ENCODE measurements at regions of chr13 and their contacts with region 1.

Region 1: GRCh38 chr13:20495082-20496023 is 30.3 kb downstream of the CRYL1 start:
- H3K4me3 Mint-ChIP-seq: no peak overlapping the region
- H3K27ac Mint-ChIP-seq: no peak overlapping the region
- H3K4me1 Mint-ChIP-seq: peaks cover 1% of the 10 kb centered on the region
- H3K27me3 Mint-ChIP-seq: no peaks in the 10 kb centered on the region

Region 2: GRCh38 chr13:20160847-20161274 is 334.5 kb before region 1 on chr13 and contains the start of gene GJA3:
- intact Hi-C with region 1: no loop called
- H3K4me3 Mint-ChIP-seq: peak within 1 kb of the TSS; percentile 74
- H3K27ac Mint-ChIP-seq: no peak within 1 kb of the TSS
- H3K4me1 Mint-ChIP-seq: peaks cover 9% of the 10 kb centered on the region
- H3K27me3 Mint-ChIP-seq: peaks cover 64% of the 10 kb centered on the region

Region 3: GRCh38 chr13:20197361-20197834 is 298.0 kb before region 1 on chr13:
- intact Hi-C with region 1: loop called (anchors 10 kb)
- H3K4me3 Mint-ChIP-seq: no peak overlapping the region
- H3K27ac Mint-ChIP-seq: no peak overlapping the region
- H3K4me1 Mint-ChIP-seq: peaks cover 20% of the 10 kb centered on the region
- H3K27me3 Mint-ChIP-seq: peaks cover 37% of the 10 kb centered on the region

Region 4: GRCh38 chr13:20566898-20567874 is 71.8 kb after region 1 on chr13 and contains the start of gene IFT88:
- intact Hi-C with region 1: loop called (anchors 5 kb)
- H3K4me3 Mint-ChIP-seq: peak within 1 kb of the TSS; percentile 91
- H3K27ac Mint-ChIP-seq: peak within 1 kb of the TSS; percentile 96
- H3K4me1 Mint-ChIP-seq: peaks cover 16% of the 10 kb centered on the region
- H3K27me3 Mint-ChIP-seq: peaks cover 5% of the 10 kb centered on the region

Region 5: GRCh38 chr13:20713751-20714150 is 218.4 kb after region 1 on chr13:
- intact Hi-C with region 1: loop called (anchors 2 kb)
- H3K4me3 Mint-ChIP-seq: no peak overlapping the region
- H3K27ac Mint-ChIP-seq: no peak overlapping the region
- H3K4me1 Mint-ChIP-seq: peaks cover 9% of the 10 kb centered on the region
- H3K27me3 Mint-ChIP-seq: peaks cover 28% of the 10 kb centered on the region

Region 6: DNA sequence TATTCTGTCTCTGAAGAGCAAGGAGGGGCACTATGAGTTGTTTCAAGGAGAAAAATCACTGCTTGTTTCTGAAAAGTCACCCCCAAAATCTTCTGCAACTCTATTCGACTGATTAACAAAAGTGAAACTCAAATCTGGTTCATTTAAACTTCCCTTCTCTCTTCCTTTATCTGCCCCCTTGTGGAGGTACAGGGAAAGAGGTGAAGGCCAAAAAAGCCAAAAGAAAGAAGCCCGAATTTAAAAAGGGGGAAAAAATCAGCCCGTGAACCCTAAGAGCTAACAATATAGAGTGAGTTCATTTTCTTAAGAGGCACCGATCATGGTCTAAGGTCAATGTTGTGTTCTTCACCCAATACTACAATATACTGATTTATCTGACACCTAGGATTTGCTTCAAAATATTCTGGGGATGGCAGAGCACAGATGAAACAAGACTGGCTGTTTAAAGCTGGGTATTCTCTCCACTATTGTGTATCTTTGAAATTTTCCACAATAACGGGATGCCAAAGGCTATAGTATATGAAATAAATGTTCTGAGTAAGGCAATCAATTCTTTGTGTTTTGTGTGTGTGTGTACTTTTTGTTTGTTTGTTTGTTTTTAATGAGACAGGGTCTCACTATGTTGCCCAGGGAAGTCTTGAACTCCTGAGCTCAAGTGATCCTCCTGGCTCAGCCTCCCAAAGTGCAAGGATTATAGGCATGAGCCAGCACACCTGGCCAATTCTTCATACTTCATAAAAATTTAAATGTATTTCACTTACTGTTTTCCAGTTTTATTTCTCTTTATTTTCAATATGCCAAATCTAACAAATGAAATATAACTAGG is 333.4 kb after region 1 on chr13:
- intact Hi-C with region 1: loop called (anchors 1 kb)
- H3K4me3 Mint-ChIP-seq: peak overlapping the region; percentile 34
- H3K27ac Mint-ChIP-seq: no peak overlapping the region
- H3K4me1 Mint-ChIP-seq: peaks cover 6% of the 10 kb centered on the region
- H3K27me3 Mint-ChIP-seq: no peaks in the 10 kb centered on the region

Region 7: GRCh38 chr13:20924758-20925394 is 429.5 kb after region 1 on chr13:
- intact Hi-C with region 1: loop called (anchors 1 kb)
- H3K4me3 Mint-ChIP-seq: no peak overlapping the region
- H3K27ac Mint-ChIP-seq: no peak overlapping the region
- H3K4me1 Mint-ChIP-seq: no peaks in the 10 kb centered on the region
- H3K27me3 Mint-ChIP-seq: no peaks in the 10 kb centered on the region